Caco-2 (cell line): ENCODE measurements at regions of chr6 and their contacts with region 1.

Region 1: DNA sequence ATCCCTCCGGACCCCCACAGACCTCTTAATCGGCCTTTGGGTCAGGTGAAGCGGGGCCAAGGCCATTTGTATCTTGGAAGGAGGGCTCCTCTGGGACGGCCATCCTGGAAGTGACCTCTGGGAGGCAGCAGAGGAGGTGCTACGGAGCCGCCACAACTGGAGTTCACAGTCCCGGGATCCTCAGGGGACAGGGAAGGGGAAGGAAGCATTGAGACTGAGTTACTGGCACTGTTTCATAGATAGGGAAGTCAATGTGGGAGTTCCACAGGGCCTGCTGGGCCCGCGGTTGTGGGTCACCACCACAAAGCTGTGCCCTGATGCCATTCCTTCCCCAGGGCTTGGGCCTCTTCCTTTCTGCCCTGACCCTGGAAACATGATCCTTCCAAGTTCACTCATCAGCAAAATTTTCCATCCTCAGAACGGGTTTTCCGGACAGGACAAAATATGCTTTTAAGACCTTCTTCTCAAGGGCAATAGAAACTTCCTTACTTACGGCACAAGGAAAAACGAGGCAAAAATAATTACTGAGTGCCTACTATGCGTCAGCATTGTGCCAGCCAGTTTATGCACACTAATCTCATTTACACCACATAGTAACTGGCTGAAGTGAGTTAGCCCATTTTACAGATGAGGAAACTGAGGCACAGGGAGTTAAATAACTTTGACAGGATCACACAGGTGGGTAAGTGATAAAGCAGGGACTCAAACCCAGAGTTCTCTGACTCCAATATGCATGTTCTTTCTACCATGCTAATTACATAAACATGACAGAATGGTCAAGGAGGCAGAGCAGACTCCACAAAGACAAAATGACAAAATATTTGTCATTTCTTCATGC is 143.8 kb downstream of the UNC5CL start:
- DNase-seq: peak; percentile 77 to 79
- H3K4me3 ChIP-seq: no peak overlapping the region
- H3K4me3 Mint-ChIP-seq: no peak overlapping the region
- H3K27ac Mint-ChIP-seq: no peak overlapping the region
- H3K4me1 ChIP-seq: peaks cover 22% of the 10 kb centered on the region
- H3K4me1 Mint-ChIP-seq: peaks cover 18% of the 10 kb centered on the region
- H3K27me3 ChIP-seq: no peaks in the 10 kb centered on the region
- H3K27me3 Mint-ChIP-seq: no peaks in the 10 kb centered on the region
- CTCF ChIP-seq: peak; percentile 65 to 79

Region 2: DNA sequence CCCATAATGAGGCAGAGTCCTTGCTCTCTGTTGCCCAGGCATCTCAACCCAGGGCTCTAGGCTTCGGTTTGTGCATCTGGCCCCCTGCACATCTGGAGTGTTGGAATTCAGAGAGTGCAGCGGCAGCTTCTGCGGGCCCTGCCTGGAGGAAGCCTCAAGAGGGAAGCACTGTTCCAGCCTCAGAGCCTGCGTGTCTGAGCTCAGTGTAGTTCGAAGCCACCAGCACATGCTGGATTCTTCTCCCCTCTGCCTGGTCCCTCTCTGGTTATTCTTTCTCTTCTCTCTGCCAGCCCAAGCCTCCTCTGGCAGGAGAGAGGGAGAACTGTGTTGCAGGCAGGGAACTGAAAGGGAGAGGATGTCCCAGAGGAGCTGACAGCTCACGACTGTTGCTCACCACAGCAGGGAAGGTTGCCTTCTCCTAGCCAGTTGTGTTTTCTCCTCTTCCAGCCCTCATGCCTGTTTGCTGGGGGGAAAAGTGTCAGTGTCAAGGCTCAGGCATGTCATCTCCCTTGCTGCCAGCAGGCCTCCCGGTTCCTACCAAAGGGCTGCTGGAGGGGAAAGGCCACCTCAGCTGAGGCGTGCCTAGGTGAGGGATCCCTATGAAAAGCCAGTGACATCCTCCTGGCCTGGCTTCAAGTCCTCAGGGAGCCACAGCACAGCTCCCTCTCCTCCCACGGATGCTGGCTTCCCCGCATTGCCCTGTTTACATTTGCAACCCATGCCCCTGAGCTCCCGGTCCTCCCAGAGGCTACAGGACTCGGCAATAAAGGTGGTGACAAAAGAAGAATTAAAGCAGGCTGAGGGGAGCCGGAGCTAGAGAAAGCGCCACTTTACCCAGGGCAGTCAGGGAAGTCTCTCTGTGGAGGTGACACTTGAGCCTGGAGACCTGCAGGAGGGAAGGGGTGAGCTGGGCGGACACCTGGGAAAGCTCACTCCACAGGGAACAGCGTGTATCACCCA is 181.9 kb before region 1 on chr6:
- CTCF ChIA-PET with region 1: no interaction called
- POLR2A ChIA-PET with region 1: no interaction called
- intact Hi-C with region 1: loop called (anchors 5 kb)
- DNase-seq: peak in 1 of 2 experiments; percentile 33
- H3K4me3 ChIP-seq: no peak overlapping the region
- H3K4me3 Mint-ChIP-seq: no peak overlapping the region
- H3K27ac Mint-ChIP-seq: no peak overlapping the region
- H3K4me1 ChIP-seq: peaks cover 17% of the 10 kb centered on the region
- H3K4me1 Mint-ChIP-seq: peaks cover 24% of the 10 kb centered on the region
- H3K27me3 ChIP-seq: no peaks in the 10 kb centered on the region
- H3K27me3 Mint-ChIP-seq: no peaks in the 10 kb centered on the region
- CTCF ChIP-seq: peak in 1 of 2 experiments; percentile 27

Region 3: GRCh38 chr6:41021832-41022231 is 126.7 kb after region 1 on chr6:
- CTCF ChIA-PET with region 1: no interaction called
- POLR2A ChIA-PET with region 1: no interaction called
- intact Hi-C with region 1: loop called (anchors 1 kb)
- DNase-seq: peak; percentile 50 to 63
- H3K4me3 ChIP-seq: no peak overlapping the region
- H3K4me3 Mint-ChIP-seq: no peak overlapping the region
- H3K27ac Mint-ChIP-seq: no peak overlapping the region
- H3K4me1 ChIP-seq: peaks cover 19% of the 10 kb centered on the region
- H3K4me1 Mint-ChIP-seq: peaks cover 7% of the 10 kb centered on the region
- H3K27me3 ChIP-seq: no peaks in the 10 kb centered on the region
- H3K27me3 Mint-ChIP-seq: no peaks in the 10 kb centered on the region
- CTCF ChIP-seq: peak in 1 of 2 experiments; percentile 40

Region 4: GRCh38 chr6:41066867-41067304 is 171.7 kb after region 1 on chr6:
- CTCF ChIA-PET with region 1: no interaction called
- POLR2A ChIA-PET with region 1: no interaction called
- intact Hi-C with region 1: loop called (anchors 1 kb)
- DNase-seq: peak; percentile 72 to 79
- H3K4me3 ChIP-seq: no peak overlapping the region
- H3K4me3 Mint-ChIP-seq: peak overlapping the region; percentile 54
- H3K27ac Mint-ChIP-seq: peak overlapping the region; percentile 77
- H3K4me1 ChIP-seq: peaks cover 61% of the 10 kb centered on the region
- H3K4me1 Mint-ChIP-seq: peaks cover 56% of the 10 kb centered on the region
- H3K27me3 ChIP-seq: no peaks in the 10 kb centered on the region
- H3K27me3 Mint-ChIP-seq: no peaks in the 10 kb centered on the region
- CTCF ChIP-seq: peak; percentile 70 to 78

Region 5: GRCh38 chr6:41122373-41122772 is 227.2 kb after region 1 on chr6:
- CTCF ChIA-PET with region 1: no interaction called
- POLR2A ChIA-PET with region 1: no interaction called
- intact Hi-C with region 1: no loop called
- DNase-seq: no peak
- H3K4me3 ChIP-seq: no peak overlapping the region
- H3K4me3 Mint-ChIP-seq: no peak overlapping the region
- H3K27ac Mint-ChIP-seq: no peak overlapping the region
- H3K4me1 ChIP-seq: no peaks in the 10 kb centered on the region
- H3K4me1 Mint-ChIP-seq: no peaks in the 10 kb centered on the region
- H3K27me3 ChIP-seq: no peaks in the 10 kb centered on the region
- H3K27me3 Mint-ChIP-seq: no peaks in the 10 kb centered on the region
- CTCF ChIP-seq: no peak

Region 6: GRCh38 chr6:41182069-41183034 is 287.2 kb after region 1 on chr6:
- CTCF ChIA-PET with region 1: interaction called, 4 read pairs
- POLR2A ChIA-PET with region 1: no interaction called
- intact Hi-C with region 1: loop called (anchors 1 kb)
- DNase-seq: peak; percentile 65 to 70
- H3K4me3 ChIP-seq: no peak overlapping the region
- H3K4me3 Mint-ChIP-seq: no peak overlapping the region
- H3K27ac Mint-ChIP-seq: no peak overlapping the region
- H3K4me1 ChIP-seq: no peaks in the 10 kb centered on the region
- H3K4me1 Mint-ChIP-seq: no peaks in the 10 kb centered on the region
- H3K27me3 ChIP-seq: no peaks in the 10 kb centered on the region
- H3K27me3 Mint-ChIP-seq: peaks cover 8% of the 10 kb centered on the region
- CTCF ChIP-seq: peak; percentile 57 to 83

Region 7: GRCh38 chr6:41247288-41247865 is 352.2 kb after region 1 on chr6:
- CTCF ChIA-PET with region 1: no interaction called
- POLR2A ChIA-PET with region 1: no interaction called
- intact Hi-C with region 1: no loop called
- DNase-seq: no peak
- H3K4me3 ChIP-seq: no peak overlapping the region
- H3K4me3 Mint-ChIP-seq: no peak overlapping the region
- H3K27ac Mint-ChIP-seq: no peak overlapping the region
- H3K4me1 ChIP-seq: no peaks in the 10 kb centered on the region
- H3K4me1 Mint-ChIP-seq: no peaks in the 10 kb centered on the region
- H3K27me3 ChIP-seq: no peaks in the 10 kb centered on the region; the same call in 1 of the 2 replicates
- H3K27me3 Mint-ChIP-seq: peaks cover 13% of the 10 kb centered on the region
- CTCF ChIP-seq: no peak

Region 8: GRCh38 chr6:41515995-41516394 is 620.8 kb after region 1 on chr6:
- CTCF ChIA-PET with region 1: no interaction called
- POLR2A ChIA-PET with region 1: no interaction called
- intact Hi-C with region 1: no loop called
- DNase-seq: no peak
- H3K4me3 ChIP-seq: no peak overlapping the region
- H3K4me3 Mint-ChIP-seq: no peak overlapping the region
- H3K27ac Mint-ChIP-seq: no peak overlapping the region
- H3K4me1 ChIP-seq: peaks cover 44% of the 10 kb centered on the region
- H3K4me1 Mint-ChIP-seq: peaks cover 52% of the 10 kb centered on the region
- H3K27me3 ChIP-seq: no peaks in the 10 kb centered on the region
- H3K27me3 Mint-ChIP-seq: no peaks in the 10 kb centered on the region
- CTCF ChIP-seq: no peak